Activated naive CD8-positive, alpha-beta T cell treated with anti-CD3 and anti-CD28 coated beads, Interleukin-2, amount 10 ng/mL, durations not matched to agents 7 days and 5 days (primary cell): ENCODE measurements at regions of chr1 and their contacts with region 1.

Region 1: GRCh38 chr1:205227584-205228006 is at the start of gene TMCC2:
- DNase-seq: peak; percentile 89
- ATAC-seq: peak; percentile 92
- H3K4me3 Mint-ChIP-seq: peak within 1 kb of the TSS; percentile 85
- H3K27ac Mint-ChIP-seq: peak within 1 kb of the TSS; percentile 87
- H3K4me1 Mint-ChIP-seq: peaks cover 34% of the 10 kb centered on the region
- H3K27me3 Mint-ChIP-seq: peaks cover 41% of the 10 kb centered on the region
- total RNA-seq, gene TMCC2: 3.4 to 4.4 TPM

Region 2: DNA sequence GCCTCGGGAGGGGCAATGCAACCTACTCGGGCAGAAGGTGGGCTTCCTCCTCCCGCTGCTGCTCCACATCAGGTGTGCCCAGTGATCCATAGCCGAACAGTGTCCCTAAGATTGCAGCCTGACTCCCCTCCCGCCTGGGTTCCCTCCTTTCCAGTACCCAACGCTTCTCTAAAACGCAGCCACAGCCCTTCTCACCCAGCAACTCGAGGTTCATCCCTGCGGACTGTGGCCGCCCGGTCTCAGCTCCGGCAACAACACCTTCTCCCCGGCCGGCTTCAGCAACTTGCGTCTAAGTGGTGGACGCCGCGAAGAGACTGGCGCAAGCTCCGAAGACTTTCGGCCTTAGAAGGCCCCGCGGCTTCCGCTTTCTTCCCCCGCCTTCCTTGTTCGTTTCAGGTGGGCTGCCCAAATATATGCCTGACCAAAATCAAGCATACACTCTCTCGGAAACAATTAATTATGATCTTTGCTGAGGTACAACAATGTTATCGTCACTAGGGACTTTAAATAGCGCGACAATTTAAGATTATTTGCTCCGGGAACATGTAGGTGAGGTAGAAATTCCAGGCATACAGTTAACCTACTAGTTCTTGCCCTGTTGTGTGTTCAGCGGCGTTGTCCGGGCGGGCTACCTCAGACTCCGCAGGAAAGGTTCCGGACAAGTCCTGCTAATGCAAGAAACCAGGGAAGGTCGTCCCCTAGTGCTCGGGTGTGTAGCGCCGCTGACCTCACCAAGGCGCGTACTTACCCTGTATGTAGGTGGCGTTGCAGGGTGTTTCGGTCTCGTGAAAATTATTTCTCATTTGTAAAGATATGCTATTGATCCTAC is 105.7 kb before region 1 on chr1 and contains the start of gene RBBP5:
- POLR2A ChIA-PET with region 1: interaction called, 12 read pairs
- DNase-seq: peak; percentile 92
- ATAC-seq: peak; percentile 95
- H3K4me3 Mint-ChIP-seq: peak within 1 kb of the TSS; percentile 95
- H3K27ac Mint-ChIP-seq: peak within 1 kb of the TSS; percentile 99
- H3K4me1 Mint-ChIP-seq: peaks cover 21% of the 10 kb centered on the region
- H3K27me3 Mint-ChIP-seq: no peaks in the 10 kb centered on the region
- total RNA-seq, gene RBBP5: 22.3 to 25.5 TPM

Region 3: DNA sequence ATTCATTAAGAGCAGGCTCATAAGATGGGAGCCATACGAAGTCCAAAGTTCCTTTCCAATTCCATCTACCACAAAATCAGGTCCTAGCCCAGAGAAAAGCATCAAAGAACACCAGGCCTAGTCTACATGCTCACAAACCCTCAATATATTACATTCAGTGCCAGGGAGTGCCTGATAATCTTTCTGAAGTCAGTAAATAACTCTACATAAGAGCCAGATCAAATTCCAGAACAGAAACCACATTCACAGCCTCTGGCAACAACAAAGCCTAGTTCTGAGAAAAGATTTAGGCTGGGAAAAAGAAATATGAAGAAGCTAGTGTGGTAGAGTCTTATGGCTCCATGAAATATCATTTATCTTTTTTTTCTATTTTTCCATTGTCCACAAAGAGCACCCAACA is 65.3 kb before region 1 on chr1:
- POLR2A ChIA-PET with region 1: no interaction called
- DNase-seq: no peak
- ATAC-seq: no peak
- H3K4me3 Mint-ChIP-seq: no peak overlapping the region
- H3K27ac Mint-ChIP-seq: no peak overlapping the region
- H3K4me1 Mint-ChIP-seq: peaks cover 16% of the 10 kb centered on the region
- H3K27me3 Mint-ChIP-seq: no peaks in the 10 kb centered on the region

Region 4: GRCh38 chr1:205211169-205211838 is 16.3 kb before region 1 on chr1 and contains the start of gene DSTYK:
- POLR2A ChIA-PET with region 1: interaction called, 28 read pairs
- DNase-seq: peak; percentile 89
- ATAC-seq: peak; percentile 93
- H3K4me3 Mint-ChIP-seq: peak within 1 kb of the TSS; percentile 96
- H3K27ac Mint-ChIP-seq: peak within 1 kb of the TSS; percentile 98
- H3K4me1 Mint-ChIP-seq: peaks cover 38% of the 10 kb centered on the region
- H3K27me3 Mint-ChIP-seq: no peaks in the 10 kb centered on the region
- total RNA-seq, gene DSTYK: 13.2 to 13.3 TPM